H1 (cell line): ENCODE measurements at regions of chr17 and their contacts with region 1.

Region 1: GRCh38 chr17:2336215-2336851 is at the start of gene TSR1:
- DNase-seq: peak; percentile 67 to 91
- H3K4me3 ChIP-seq: peak within 1 kb of the TSS; percentile 92 to 96 (median 94)
- H3K27ac ChIP-seq: peak within 1 kb of the TSS; percentile 72
- H3K4me1 ChIP-seq: peaks cover 3 to 30% (median 13%) of the 10 kb centered on the region in 4 experiments; a peak in 6 of 7 replicates
- H3K27me3 ChIP-seq: no peaks in the 10 kb centered on the region
- CTCF ChIP-seq: peak in 1 of 3 experiments; percentile 12; a peak in 1 of 4 replicates
- EP300 ChIP-seq: peak in 1 of 2 experiments; percentile 31; a peak in 1 of 3 replicates
- POLR2A ChIP-seq: peak; percentile 73 to 89; a peak in 2 of 3 replicates
- RAD21 ChIP-seq: no peak; a peak in 1 of 4 replicates
- total RNA-seq, gene TSR1: 69.7 and 77.0 TPM in 2 replicates

Region 2: DNA sequence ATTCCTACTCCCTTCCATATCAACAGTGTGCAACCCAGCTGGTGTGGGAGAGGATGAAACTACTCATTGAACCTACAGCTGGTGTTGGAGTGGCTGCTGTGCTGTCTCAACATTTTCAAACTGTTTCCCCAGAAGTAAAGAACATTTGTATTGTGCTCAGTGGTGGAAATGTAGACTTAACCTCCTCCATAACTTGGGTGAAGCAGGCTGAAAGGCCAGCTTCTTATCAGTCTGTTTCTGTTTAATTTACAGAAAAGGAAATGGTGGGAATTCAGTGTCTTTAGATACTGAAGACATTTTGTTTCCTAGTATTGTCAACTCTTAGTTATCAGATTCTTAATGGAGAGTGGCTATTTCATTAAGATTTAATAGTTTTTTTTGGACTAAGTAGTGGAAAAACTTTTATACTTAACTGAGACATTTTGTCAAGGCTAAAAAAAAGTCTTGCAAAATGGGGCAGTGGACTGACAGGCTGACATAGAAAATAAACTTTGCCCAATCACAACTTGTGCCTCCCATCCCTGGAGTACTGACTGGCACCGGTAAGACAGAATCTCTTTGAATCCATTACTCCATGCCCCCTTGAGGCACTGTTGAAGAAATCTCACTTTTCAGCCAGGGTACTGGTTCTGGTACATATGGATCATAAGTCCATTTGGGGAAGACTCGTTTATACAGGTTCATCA is 12.6 kb before region 1 on chr17:
- CTCF ChIA-PET with region 1: interaction called, 4 read pairs
- POLR2A ChIA-PET with region 1: interaction called, 230 read pairs
- DNase-seq: no peak
- H3K4me3 ChIP-seq: no peak overlapping the region
- H3K27ac ChIP-seq: no peak overlapping the region
- H3K4me1 ChIP-seq: no peaks in the 10 kb centered on the region
- H3K27me3 ChIP-seq: no peaks in the 10 kb centered on the region
- CTCF ChIP-seq: no peak
- EP300 ChIP-seq: no peak
- POLR2A ChIP-seq: no peak
- RAD21 ChIP-seq: no peak

Region 3: GRCh38 chr17:2363851-2364762 is 27.8 kb after region 1 on chr17:
- CTCF ChIA-PET with region 1: interaction called, 15 read pairs
- POLR2A ChIA-PET with region 1: interaction called, 25 read pairs
- DNase-seq: no peak
- H3K4me3 ChIP-seq: no peak overlapping the region
- H3K27ac ChIP-seq: no peak overlapping the region
- H3K4me1 ChIP-seq: peaks cover 0 to 2% (median 0%) of the 10 kb centered on the region in 4 experiments; a peak in 3 of 7 replicates
- H3K27me3 ChIP-seq: no peaks in the 10 kb centered on the region
- CTCF ChIP-seq: no peak
- EP300 ChIP-seq: no peak
- POLR2A ChIP-seq: no peak
- RAD21 ChIP-seq: no peak

Region 4: GRCh38 chr17:2374549-2375277 is 38.4 kb after region 1 on chr17:
- CTCF ChIA-PET with region 1: interaction called, 3 read pairs
- POLR2A ChIA-PET with region 1: interaction called, 25 read pairs
- DNase-seq: no peak
- H3K4me3 ChIP-seq: no peak overlapping the region
- H3K27ac ChIP-seq: no peak overlapping the region
- H3K4me1 ChIP-seq: peaks cover 0 to 7% (median 3%) of the 10 kb centered on the region in 4 experiments; a peak in 3 of 7 replicates
- H3K27me3 ChIP-seq: no peaks in the 10 kb centered on the region
- CTCF ChIP-seq: no peak
- EP300 ChIP-seq: no peak
- POLR2A ChIP-seq: no peak
- RAD21 ChIP-seq: no peak